HEK293 (cell line): ENCODE measurements at regions of chr4 and their contacts with region 1.

Region 1: GRCh38 chr4:112516471-112517066 is 589 bp upstream of the NEUROG2 start:
- H3K4me3 ChIP-seq: peak overlapping the region; percentile 49
- H3K27ac ChIP-seq: no peak overlapping the region
- H3K4me1 ChIP-seq: no peaks in the 10 kb centered on the region
- CTCF ChIP-seq: no peak

Region 2: DNA sequence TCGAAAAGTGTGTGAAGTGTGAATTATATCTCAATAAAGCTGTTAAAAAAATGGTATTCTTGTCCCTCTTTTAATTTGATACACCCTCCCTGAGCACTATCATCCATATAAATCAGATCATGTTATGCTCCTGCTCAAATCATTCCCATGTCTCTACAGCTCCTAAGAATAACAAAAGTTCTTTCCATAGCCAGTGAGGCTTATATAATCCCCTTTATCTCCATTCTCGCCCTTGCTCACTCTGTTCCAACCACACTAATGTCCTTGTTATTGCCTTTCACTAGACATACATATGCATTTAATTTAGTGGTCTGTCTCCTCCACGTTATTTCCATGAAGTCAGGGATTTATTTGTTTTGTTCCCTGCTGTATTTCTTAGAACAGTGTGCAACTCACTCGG is 109.7 kb after region 1 on chr4:
- CTCF ChIA-PET with region 1: no interaction called
- POLR2A ChIA-PET with region 1: interaction called, 14 read pairs
- H3K4me3 ChIP-seq: no peak overlapping the region
- H3K27ac ChIP-seq: no peak overlapping the region
- H3K4me1 ChIP-seq: no peaks in the 10 kb centered on the region
- CTCF ChIP-seq: no peak